ENCODE measurements at regions of chr11 and their contacts with region 1.

Region 1: DNA sequence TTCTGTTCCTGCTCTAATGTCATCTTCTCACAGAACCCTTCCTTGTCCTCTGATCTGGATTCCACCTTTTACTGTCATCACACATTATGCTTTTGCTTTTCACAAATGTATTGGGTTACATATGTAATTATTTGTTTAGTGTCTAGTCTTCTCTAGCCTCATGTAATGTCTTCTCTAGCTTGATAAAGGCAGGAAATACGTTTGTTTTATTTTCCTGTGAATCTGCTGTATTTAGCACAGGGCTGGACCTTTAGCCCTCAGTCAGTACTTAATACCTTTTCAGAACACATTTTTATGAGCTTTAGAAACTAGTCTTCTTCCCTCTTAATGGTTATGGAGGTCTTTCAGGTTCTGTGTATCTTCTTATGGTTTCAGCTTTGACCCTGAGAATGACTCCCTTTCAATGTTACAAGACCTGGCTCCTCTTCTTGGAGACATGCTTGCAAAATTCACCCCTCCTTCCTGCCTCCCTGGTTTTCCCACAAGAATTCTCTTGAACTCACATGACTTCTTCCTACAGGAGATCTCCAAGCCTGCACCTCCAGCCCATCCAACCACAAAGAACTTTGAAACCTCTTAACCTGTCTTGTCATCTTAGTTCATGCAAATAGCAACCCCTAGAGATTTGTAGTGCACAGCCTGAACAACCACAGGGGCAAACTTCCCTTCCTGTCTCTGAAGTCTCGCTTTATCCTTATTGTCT is 132.7 kb upstream of the DDI1 start:
- DNase-seq: no peak
- H3K4me3 ChIP-seq: no peak overlapping the region
- H3K27ac ChIP-seq: no peak overlapping the region
- H3K4me1 ChIP-seq: peaks cover 36% of the 10 kb centered on the region
- H3K27me3 ChIP-seq: no peaks in the 10 kb centered on the region
- CTCF ChIP-seq: no peak
- POLR2A ChIP-seq: no peak

Region 2: DNA sequence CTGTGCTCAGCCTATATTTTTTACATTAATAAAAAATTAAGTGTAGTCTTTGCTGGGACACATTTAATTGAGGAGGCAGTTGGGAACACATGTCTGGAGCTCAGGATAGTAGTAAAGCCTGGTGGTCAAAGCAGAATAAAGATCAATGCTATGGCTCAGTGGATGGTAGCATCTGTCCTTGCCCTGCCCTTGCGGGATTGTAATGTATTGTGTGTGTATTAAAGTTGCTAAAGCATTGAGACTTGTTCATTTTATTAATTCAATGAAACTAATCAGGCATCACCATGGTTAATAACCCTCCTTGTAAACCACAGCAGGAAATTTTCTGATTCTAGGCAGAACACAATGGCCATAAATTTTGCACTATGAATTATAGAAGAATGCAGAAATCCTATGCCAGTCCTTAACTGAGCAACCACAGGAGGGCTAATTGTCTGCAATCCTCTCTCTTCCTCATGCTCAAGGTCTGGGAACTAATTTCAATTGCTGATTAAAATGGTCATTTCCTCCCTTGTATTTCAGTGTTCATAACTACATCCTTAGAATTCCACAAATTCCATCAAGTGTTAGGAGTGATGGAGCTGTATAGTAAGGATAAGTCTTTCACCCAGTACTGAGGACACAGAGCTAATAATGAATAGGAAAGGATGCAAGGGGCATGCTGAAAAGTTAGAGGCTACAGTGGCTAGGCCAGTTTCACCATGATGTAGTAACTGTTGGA is 270.5 kb before region 1 on chr11:
- CTCF ChIA-PET with region 1: no interaction called
- POLR2A ChIA-PET with region 1: no interaction called
- dilution Hi-C with region 1: no loop called
- intact Hi-C with region 1: loop called (anchors 2 kb)
- DNase-seq: peak; percentile 81
- H3K4me3 ChIP-seq: no peak overlapping the region
- H3K27ac ChIP-seq: peak overlapping the region; percentile 97
- H3K4me1 ChIP-seq: peaks cover 42% of the 10 kb centered on the region
- H3K27me3 ChIP-seq: no peaks in the 10 kb centered on the region
- CTCF ChIP-seq: peak in 1 of 2 donors; percentile 27
- POLR2A ChIP-seq: no peak

Region 3: DNA sequence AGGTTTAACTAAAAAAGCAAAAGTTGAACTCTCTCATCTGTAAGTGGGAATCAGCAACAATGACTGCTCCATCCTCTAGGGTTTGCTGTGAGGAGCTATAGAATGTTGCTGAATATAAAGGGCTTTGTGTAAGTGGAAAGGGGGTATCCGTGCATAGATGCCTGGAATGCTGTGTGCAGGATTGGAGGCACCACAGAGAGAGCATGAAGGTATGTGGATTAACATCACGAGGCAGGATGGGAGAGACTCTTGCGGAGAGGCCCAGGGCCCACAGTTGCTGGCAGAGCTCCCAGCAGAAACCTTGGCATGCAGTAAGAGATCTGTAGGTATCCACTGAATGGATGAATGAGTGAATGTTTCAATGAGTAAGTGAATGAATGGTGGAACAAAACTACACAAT is 166.0 kb before region 1 on chr11:
- CTCF ChIA-PET with region 1: no interaction called
- POLR2A ChIA-PET with region 1: no interaction called
- dilution Hi-C with region 1: no loop called
- intact Hi-C with region 1: loop called (anchors 5 kb)
- DNase-seq: no peak
- H3K4me3 ChIP-seq: no peak overlapping the region
- H3K27ac ChIP-seq: no peak overlapping the region
- H3K4me1 ChIP-seq: peaks cover 2% of the 10 kb centered on the region
- H3K27me3 ChIP-seq: no peaks in the 10 kb centered on the region
- CTCF ChIP-seq: no peak
- POLR2A ChIP-seq: no peak

Region 4: DNA sequence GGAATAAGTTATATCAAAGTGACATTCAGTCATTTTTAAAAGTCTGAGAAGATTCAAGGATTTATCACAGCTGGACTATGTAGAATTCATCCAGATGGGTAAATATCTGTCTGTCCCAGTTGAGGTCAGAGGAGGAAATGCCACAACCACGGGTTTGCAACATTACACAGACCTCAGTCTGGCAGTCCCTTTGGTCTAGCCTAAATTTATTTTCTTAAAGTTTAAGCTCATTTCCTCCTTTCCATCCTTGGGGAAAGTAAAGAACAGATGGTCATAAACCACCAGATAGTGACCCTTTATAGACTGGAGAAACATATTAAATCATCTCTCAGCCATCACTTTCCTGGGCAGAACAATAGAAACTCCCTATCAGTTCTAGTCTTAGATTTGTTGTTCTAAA is 105.7 kb before region 1 on chr11:
- CTCF ChIA-PET with region 1: no interaction called
- POLR2A ChIA-PET with region 1: no interaction called
- dilution Hi-C with region 1: no loop called
- intact Hi-C with region 1: loop called (anchors 2 kb)
- DNase-seq: peak; percentile 75
- H3K4me3 ChIP-seq: no peak overlapping the region
- H3K27ac ChIP-seq: peak overlapping the region; percentile 21
- H3K4me1 ChIP-seq: peaks cover 23% of the 10 kb centered on the region
- H3K27me3 ChIP-seq: no peaks in the 10 kb centered on the region
- CTCF ChIP-seq: no peak
- POLR2A ChIP-seq: no peak

Region 5: DNA sequence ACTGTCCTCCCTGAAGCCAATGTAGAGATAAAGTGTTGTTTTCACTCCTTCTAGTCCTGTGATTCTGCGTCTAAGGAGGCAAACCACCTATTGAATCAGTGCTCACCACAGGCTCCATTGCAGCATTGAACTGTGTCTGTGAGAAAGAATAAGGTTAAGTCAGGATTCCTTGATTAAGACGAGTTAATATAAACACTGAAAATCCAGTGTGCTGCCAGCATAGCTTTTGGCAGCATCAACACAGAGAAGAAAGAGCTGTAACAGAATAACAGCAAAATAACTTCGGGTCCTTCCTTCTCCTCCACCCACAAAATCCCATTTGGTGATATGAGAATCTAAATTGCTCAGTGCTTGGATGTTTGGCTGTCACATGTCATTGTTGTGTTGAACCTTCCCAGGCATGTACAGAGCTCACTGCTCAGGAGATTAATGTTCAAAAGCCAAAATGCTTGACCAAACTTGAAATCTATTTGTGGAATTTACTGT is 52.6 kb before region 1 on chr11:
- CTCF ChIA-PET with region 1: no interaction called
- POLR2A ChIA-PET with region 1: no interaction called
- dilution Hi-C with region 1: no loop called
- intact Hi-C with region 1: no loop called
- DNase-seq: no peak
- H3K4me3 ChIP-seq: no peak overlapping the region
- H3K27ac ChIP-seq: no peak overlapping the region
- H3K4me1 ChIP-seq: no peaks in the 10 kb centered on the region
- H3K27me3 ChIP-seq: no peaks in the 10 kb centered on the region
- CTCF ChIP-seq: no peak
- POLR2A ChIP-seq: no peak

Region 6: GRCh38 chr11:104024572-104024971 is 120.8 kb after region 1 on chr11:
- CTCF ChIA-PET with region 1: no interaction called
- POLR2A ChIA-PET with region 1: no interaction called
- dilution Hi-C with region 1: no loop called
- intact Hi-C with region 1: no loop called
- DNase-seq: no peak
- H3K4me3 ChIP-seq: no peak overlapping the region
- H3K27ac ChIP-seq: no peak overlapping the region
- H3K4me1 ChIP-seq: no peaks in the 10 kb centered on the region
- H3K27me3 ChIP-seq: no peaks in the 10 kb centered on the region
- CTCF ChIP-seq: no peak
- POLR2A ChIP-seq: no peak

Region 7: DNA sequence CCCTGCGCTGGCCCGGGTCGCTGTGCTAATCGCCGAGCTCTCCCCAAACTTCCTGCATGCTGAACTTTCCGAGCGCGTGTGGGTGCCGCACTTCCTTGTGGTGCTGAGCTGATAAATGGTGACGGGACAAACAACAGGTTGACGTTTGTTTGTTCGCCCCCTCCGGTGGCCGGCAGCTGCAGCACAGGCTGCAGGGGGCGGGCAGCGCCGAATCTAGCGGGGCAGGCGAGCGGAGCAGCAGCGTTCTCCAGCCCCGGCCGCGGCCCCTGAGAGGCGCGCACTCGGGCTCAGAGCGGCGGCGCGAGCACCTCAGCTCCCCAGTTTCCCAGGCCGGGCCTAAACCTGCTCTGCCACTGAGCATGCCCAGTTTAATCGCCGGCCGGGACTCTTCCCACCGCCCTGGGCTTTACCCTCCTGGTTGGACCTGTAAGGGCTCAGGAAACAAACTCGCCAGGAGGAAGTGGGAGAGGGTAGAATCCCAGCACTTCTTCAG is 260.3 kb after region 1 on chr11 and contains the start of gene PDGFD:
- CTCF ChIA-PET with region 1: interaction called, 6 read pairs
- POLR2A ChIA-PET with region 1: no interaction called
- dilution Hi-C with region 1: no loop called
- intact Hi-C with region 1: loop called (anchors 5 kb)
- DNase-seq: peak; percentile 89
- H3K4me3 ChIP-seq: peak within 1 kb of the TSS; percentile 66 to 94 (median 93)
- H3K27ac ChIP-seq: peak within 1 kb of the TSS; percentile 52
- H3K4me1 ChIP-seq: peaks cover 10% of the 10 kb centered on the region
- H3K27me3 ChIP-seq: no peaks in the 10 kb centered on the region
- CTCF ChIP-seq: peak; percentile 57 to 73
- POLR2A ChIP-seq: no peak
- total RNA-seq, gene PDGFD: 13.1 and 14.1 TPM in 2 replicates

Region 8: GRCh38 chr11:104175769-104176168 is 272.0 kb after region 1 on chr11:
- CTCF ChIA-PET with region 1: no interaction called
- POLR2A ChIA-PET with region 1: no interaction called
- dilution Hi-C with region 1: no loop called
- intact Hi-C with region 1: no loop called
- DNase-seq: no peak
- H3K4me3 ChIP-seq: no peak overlapping the region
- H3K27ac ChIP-seq: no peak overlapping the region
- H3K4me1 ChIP-seq: no peaks in the 10 kb centered on the region
- H3K27me3 ChIP-seq: peaks cover 0 to 5% of the 10 kb centered on the region in 2 experiments
- CTCF ChIP-seq: no peak
- POLR2A ChIP-seq: no peak